H1 (cell line): ENCODE measurements at regions of chr7 and their contacts with region 1.

Region 1: GRCh38 chr7:76069238-76069638 is 21.3 kb downstream of the MDH2 start:
- DNase-seq: peak in 1 of 2 experiments; percentile 46
- H3K4me3 ChIP-seq: no peak overlapping the region
- H3K27ac ChIP-seq: no peak overlapping the region
- H3K4me1 ChIP-seq: peaks cover 0 to 3% (median 1%) of the 10 kb centered on the region in 4 experiments; a peak in 5 of 7 replicates
- H3K27me3 ChIP-seq: no peaks in the 10 kb centered on the region
- CTCF ChIP-seq: peak; percentile 32 to 69 (median 67)
- EP300 ChIP-seq: no peak
- POLR2A ChIP-seq: no peak
- RAD21 ChIP-seq: peak; percentile 84

Region 2: DNA sequence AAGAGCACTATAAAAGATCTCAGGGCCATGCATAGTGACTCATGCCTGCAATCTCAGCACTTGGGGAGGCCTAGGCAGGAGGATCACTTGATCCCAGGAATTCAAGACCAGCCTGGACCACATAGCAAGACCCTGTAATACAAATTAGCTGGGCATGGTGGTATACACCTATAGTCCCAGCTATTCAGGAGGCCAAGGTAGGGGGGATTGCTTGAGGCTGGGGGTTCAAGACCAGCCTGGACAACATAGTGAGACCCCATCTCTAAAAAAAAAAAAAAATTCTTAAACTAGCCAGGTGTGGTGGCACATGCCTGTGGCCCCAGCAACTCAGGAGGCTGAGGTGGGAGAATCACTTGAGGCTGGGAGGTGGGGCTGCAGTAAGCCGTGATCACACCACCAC is 37.3 kb before region 1 on chr7:
- CTCF ChIA-PET with region 1: no interaction called
- POLR2A ChIA-PET with region 1: no interaction called
- DNase-seq: no peak
- H3K4me3 ChIP-seq: no peak overlapping the region
- H3K27ac ChIP-seq: no peak overlapping the region
- H3K4me1 ChIP-seq: no peaks in the 10 kb centered on the region
- H3K27me3 ChIP-seq: no peaks in the 10 kb centered on the region
- CTCF ChIP-seq: no peak
- EP300 ChIP-seq: no peak
- POLR2A ChIP-seq: no peak
- RAD21 ChIP-seq: no peak

Region 3: DNA sequence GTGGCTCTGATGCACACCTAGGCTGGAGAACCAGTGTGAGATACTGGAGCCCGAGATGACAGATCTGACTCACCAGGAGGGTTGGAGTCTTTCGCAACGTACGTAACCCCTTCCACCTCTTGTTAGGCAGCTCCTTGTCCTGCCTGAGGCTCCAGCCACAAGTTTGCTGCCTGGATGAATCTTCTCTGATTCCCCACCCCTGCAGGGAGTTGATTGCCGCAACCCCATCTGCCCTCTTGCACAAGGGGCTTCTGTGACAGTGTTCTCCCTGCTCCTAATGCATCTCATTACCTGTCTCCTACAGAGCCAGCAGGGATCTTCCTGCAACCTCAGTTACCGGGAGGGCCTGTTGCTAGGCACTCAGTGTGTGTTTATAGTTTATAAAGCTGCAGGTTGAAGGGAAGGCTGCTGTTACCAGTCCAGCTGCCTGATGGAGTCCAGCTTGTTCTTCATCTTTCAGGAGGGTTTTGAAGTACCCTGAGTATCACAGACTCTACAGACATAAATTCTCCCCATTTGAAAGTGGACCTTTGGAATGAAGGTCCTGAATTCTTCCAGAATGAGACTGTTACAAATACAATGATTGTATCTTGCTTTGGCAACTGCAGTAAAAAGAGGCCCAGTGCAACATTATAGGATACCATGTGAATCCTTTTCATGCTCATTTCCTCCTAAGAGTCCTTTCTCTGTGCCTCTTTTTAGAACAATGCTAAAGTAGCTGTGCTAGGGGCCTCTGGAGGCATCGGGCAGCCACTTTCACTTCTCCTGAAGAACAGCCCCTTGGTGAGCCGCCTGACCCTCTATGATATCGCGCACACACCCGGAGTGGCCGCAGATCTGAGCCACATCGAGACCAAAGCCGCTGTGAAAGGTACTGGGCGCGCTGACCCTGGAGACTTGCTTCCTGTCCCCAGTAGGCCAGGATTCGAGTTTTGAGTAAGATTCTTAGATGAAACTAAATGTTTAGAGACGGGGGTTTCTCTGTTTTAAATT is 14.8 kb before region 1 on chr7:
- CTCF ChIA-PET with region 1: interaction called, 15 read pairs
- POLR2A ChIA-PET with region 1: interaction called, 127 read pairs
- DNase-seq: no peak
- H3K4me3 ChIP-seq: no peak overlapping the region
- H3K27ac ChIP-seq: peak overlapping the region; percentile 29; the same call in 1 of the 2 replicates
- H3K4me1 ChIP-seq: peaks cover 0 to under 1% (median 0%) of the 10 kb centered on the region in 4 experiments; a peak in 4 of 7 replicates
- H3K27me3 ChIP-seq: no peaks in the 10 kb centered on the region
- CTCF ChIP-seq: no peak
- EP300 ChIP-seq: no peak
- POLR2A ChIP-seq: no peak
- RAD21 ChIP-seq: no peak

Region 4: GRCh38 chr7:76086070-76086469 is 16.8 kb after region 1 on chr7:
- CTCF ChIA-PET with region 1: interaction called, 16 read pairs
- POLR2A ChIA-PET with region 1: interaction called, 3 read pairs
- DNase-seq: no peak
- H3K4me3 ChIP-seq: no peak overlapping the region
- H3K27ac ChIP-seq: no peak overlapping the region
- H3K4me1 ChIP-seq: no peaks in the 10 kb centered on the region
- H3K27me3 ChIP-seq: no peaks in the 10 kb centered on the region
- CTCF ChIP-seq: no peak
- EP300 ChIP-seq: no peak
- POLR2A ChIP-seq: no peak
- RAD21 ChIP-seq: no peak

Region 5: DNA sequence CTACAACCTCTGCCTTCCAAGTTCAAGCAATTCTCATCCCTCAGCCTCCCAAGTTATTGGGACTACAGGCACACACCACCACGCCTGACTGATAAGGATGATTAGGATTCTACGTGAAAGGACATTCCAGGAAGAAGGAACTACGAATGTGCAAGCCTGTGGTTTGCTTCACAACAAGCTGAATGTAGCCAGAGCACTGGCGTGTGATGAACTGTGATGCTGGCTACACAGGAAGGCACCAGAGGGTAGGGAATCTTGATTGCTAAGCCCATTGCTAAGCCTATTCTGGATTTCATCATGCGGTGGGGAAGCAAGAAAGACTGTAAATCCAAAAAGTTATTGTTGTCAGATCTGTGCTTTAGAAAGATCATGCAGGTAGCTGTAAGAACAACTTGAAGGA is 60.1 kb after region 1 on chr7:
- CTCF ChIA-PET with region 1: interaction called, 19 read pairs
- POLR2A ChIA-PET with region 1: no interaction called
- DNase-seq: no peak
- H3K4me3 ChIP-seq: no peak overlapping the region
- H3K27ac ChIP-seq: no peak overlapping the region
- H3K4me1 ChIP-seq: no peaks in the 10 kb centered on the region
- H3K27me3 ChIP-seq: no peaks in the 10 kb centered on the region
- CTCF ChIP-seq: no peak
- EP300 ChIP-seq: no peak
- POLR2A ChIP-seq: no peak
- RAD21 ChIP-seq: no peak

Region 6: DNA sequence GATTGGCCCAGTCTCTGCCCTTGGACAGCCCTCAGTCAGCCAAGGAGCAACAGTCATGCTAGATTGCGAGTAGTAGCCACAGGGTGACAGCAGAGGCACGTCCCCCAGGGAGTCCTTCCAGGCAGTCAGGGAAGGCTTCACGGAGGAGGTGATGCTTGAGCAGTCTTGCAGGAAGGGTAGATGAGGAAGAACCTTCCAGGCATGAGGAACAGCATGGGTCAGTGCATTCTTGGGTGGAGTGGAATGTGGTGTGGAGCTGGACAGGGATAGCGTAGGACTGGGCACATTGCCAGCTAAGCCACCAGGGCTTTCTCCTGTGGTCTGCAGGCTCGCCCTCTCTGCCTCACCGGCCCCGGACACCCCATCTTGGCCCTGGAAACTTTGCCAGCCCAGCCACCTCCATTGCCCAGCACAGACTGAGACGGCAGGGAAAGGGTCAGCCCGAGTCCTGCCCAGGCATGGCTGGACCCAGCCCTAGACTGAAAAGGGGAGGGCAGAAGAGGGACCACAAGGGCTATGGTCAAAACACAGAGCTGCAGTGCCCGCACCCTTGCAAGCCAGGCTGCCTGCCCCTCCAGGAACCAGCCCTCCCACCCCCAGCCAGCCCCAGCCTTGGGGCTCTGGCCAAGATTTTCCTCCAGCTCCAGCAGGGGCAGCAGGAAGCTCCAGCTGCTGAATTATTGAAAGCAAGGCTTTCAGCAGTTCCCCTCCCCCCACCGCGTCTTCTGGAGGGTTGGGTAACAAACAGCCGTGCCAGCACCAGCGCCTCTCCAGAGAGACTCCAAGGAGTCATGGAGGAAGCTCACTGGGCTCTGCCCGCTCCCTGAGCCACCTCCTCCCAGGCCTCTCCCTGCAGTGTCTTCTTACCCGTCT is 151.2 kb after region 1 on chr7:
- CTCF ChIA-PET with region 1: no interaction called
- POLR2A ChIA-PET with region 1: no interaction called
- DNase-seq: peak; percentile 62 to 84
- H3K4me3 ChIP-seq: peak overlapping the region in 1 of 4 experiments; percentile 10; a peak in 2 of 8 replicates
- H3K27ac ChIP-seq: peak overlapping the region; percentile 64; the same call in 1 of the 2 replicates
- H3K4me1 ChIP-seq: peaks cover 19 to 45% (median 22%) of the 10 kb centered on the region in 4 experiments
- H3K27me3 ChIP-seq: no peaks in the 10 kb centered on the region
- CTCF ChIP-seq: peak; percentile 31 to 50 (median 49); a peak in 3 of 4 replicates
- EP300 ChIP-seq: peak in 1 of 2 experiments; percentile 20; a peak in 1 of 3 replicates
- POLR2A ChIP-seq: peak in 1 of 2 experiments; percentile 49; a peak in 1 of 3 replicates
- RAD21 ChIP-seq: peak; percentile 53 to 68